Calu3 (cell line): ENCODE measurements at regions of chr13 and their contacts with region 1.

Region 1: DNA sequence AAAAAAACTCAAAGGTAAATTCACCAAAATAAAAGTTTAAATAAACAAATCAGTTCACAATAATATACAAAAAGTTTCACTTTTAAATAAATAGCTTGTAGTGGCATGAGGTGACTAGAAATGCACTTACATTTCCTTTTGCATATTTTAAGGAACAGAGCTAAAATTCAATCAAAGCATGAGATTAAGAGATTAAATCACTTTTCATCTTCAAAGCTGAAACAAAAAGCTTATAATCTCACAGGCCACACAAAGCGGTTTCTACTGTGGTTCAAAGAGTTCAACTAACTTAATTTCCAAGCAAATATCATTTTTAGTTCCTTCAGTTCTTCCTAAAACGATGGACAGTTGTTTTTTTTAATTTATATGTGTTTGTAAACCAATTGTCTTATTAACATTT is 38.9 kb downstream of the TSC22D1 start:
- DNase-seq: no peak
- H3K4me3 Mint-ChIP-seq: no peak overlapping the region
- H3K27ac Mint-ChIP-seq: no peak overlapping the region
- H3K4me1 Mint-ChIP-seq: no peaks in the 10 kb centered on the region
- H3K27me3 Mint-ChIP-seq: no peaks in the 10 kb centered on the region
- CTCF ChIP-seq: no peak

Region 2: DNA sequence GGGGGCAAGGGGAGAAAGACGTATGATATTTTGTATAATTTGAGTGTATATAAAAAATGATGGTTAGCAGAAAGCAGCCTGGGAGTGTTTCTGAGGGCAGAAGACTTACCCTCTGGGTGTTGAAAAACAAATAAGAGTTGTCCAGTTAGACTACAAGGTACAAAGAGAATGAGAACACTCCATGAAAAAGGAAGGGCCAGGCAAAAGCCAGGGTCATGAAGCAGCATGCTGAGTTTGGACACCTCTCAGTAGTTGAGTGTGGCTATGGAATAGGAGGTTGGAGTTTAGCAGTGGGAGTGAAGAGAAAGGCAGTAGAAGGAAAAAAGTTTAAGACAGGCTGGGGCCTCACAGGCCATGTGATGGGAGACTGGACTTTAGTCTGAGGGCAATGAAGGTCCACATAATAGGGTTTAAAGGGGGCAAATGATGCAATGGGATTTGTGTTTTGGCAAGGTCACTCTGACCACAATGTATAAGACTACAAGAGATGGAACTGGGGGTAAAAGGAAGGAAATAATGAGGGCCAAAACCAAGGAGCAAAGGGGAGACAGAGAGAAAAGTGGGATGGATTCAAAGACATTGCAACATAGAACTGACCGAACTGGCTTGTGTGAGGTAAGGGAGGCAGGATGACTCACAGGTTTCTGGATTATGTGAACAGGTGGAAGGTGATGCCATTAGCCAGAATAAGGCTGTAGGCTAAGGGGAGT is 87.1 kb before region 1 on chr13:
- CTCF ChIA-PET with region 1: no interaction called
- intact Hi-C with region 1: no loop called
- DNase-seq: peak; percentile 40
- H3K4me3 Mint-ChIP-seq: peak overlapping the region; percentile 2
- H3K27ac Mint-ChIP-seq: peak overlapping the region; percentile 57
- H3K4me1 Mint-ChIP-seq: peaks cover 17% of the 10 kb centered on the region
- H3K27me3 Mint-ChIP-seq: no peaks in the 10 kb centered on the region
- CTCF ChIP-seq: no peak

Region 3: DNA sequence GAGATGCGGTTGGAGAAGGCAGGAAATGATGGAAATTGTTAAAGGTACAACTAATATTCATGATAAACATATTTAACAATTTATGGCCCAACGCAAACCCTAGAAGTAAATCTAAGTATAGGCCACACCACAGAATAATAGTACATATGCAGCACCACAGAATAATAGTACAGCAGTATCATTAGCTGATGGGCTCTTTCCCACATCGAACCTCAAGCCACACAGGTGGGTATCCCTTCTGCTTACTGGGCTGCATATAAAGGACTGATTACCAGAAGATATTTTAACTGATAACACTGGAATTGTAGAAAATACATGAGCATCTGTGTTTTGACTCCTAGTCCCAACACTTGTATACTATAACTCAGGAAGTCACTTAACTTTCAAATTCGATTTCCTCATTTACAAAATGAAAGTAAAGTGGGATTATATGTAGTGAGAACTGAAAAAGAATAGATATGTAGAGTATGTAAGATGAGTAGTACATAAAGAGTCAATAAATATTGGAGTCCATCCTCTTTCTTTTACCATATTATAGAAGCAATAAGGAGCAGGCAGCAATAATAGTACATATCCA is 52.6 kb before region 1 on chr13:
- CTCF ChIA-PET with region 1: no interaction called
- intact Hi-C with region 1: no loop called
- DNase-seq: no peak
- H3K4me3 Mint-ChIP-seq: no peak overlapping the region
- H3K27ac Mint-ChIP-seq: no peak overlapping the region
- H3K4me1 Mint-ChIP-seq: no peaks in the 10 kb centered on the region
- H3K27me3 Mint-ChIP-seq: no peaks in the 10 kb centered on the region
- CTCF ChIP-seq: no peak

Region 4: DNA sequence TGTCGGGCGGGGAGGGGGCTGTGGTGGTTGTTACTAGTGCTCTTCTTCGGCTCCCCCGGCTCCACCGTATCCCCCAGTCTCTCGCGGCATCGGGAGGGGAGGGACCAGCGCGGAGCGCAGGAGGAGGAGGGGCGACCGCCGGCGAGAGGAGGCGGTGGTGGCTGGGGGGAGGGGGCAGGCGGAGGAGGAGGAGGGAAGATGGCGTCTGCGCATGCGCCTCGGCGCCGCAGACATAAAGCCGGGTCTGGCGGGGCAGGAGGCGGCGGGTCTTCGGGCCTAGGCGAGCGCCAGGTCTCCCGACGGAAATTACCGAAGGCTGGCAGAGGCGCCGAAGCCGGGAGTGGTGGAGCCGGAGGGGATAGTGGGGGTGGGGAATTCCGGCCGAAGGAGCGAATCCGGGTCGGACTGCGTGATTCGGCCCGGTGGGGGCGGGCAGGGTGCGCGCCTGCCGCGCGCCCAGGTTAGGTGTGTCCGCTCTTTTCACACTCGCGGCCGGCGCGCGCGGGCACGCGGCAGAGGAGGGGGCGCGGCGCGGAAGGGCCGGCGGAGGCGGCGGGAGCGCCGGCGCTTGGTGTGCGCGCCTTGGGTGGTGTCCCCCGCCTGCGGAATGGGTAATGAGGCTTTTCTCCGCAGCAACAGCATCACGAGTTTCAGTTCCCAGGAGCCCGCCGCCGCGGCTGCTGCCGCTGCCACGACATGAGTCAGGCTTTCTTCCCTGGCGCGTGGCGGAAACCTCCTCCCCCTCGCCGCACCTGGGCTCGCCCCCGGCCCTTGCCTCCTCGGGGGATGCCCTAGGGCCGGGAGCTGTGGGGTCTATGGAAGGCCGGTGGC is 40.2 kb after region 1 on chr13:
- CTCF ChIA-PET with region 1: interaction called, 27 read pairs
- intact Hi-C with region 1: no loop called
- DNase-seq: peak; percentile 93
- H3K4me3 Mint-ChIP-seq: peak overlapping the region; percentile 83
- H3K27ac Mint-ChIP-seq: peak overlapping the region; percentile 36
- H3K4me1 Mint-ChIP-seq: peaks cover 21% of the 10 kb centered on the region
- H3K27me3 Mint-ChIP-seq: no peaks in the 10 kb centered on the region
- CTCF ChIP-seq: no peak